WTC11 (cell line): ENCODE measurements at regions of chr2 and their contacts with region 1.

Region 1: DNA sequence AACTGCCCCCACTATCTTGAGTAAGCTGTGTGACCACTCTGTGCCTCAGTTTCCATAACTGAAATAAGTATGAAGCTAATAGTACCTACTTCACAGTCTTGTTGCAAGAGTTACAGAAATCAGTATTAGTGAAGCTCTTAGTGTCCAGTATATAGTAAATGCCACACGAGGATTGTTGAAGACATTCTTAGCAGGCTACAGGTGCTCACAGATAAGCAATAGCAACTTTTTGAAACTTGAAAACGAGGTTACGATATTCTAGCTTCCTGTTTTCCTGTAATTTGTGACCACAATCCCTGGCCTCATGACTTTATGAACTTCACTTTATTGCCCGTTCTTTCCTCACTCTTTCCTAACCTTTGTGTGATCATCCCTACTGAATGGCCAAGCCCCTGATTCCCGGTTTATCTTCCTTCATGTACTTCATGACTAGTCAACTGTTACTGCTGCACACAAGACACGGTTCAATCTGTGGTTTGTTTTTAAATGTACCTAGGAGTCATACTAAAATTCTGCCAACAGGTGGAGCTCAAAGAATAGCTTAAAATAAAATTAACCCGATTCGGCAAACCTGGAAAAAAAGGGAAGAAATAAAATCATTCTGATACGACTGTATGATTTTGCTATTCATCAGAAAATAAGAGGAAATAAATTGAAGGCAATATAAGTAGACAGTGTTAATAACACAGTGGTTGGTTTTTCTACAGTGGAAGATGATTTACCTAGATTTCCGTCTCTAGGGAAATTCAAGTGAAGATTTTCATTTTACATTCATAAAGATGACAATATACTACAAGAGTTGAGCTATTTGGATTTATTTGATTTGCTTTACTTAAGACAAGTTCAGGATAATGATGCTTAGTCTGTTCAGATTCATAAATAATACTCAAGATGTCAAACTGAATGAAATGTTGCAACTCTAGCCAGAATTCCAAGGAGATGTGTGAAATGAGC is 38.1 kb upstream of the STAT1 start:
- DNase-seq: no peak
- ATAC-seq: peak; percentile 53; the same call in 1 of the 2 replicates
- H3K4me3 Mint-ChIP-seq: no peak overlapping the region
- H3K27ac Mint-ChIP-seq: no peak overlapping the region
- H3K4me1 Mint-ChIP-seq: peaks cover 10% of the 10 kb centered on the region; the same call in 1 of the 2 replicates
- H3K27me3 Mint-ChIP-seq: no peaks in the 10 kb centered on the region; the same call in 1 of the 2 replicates
- CTCF ChIP-seq: peak; percentile 54; the same call in 1 of the 2 replicates

Region 2: DNA sequence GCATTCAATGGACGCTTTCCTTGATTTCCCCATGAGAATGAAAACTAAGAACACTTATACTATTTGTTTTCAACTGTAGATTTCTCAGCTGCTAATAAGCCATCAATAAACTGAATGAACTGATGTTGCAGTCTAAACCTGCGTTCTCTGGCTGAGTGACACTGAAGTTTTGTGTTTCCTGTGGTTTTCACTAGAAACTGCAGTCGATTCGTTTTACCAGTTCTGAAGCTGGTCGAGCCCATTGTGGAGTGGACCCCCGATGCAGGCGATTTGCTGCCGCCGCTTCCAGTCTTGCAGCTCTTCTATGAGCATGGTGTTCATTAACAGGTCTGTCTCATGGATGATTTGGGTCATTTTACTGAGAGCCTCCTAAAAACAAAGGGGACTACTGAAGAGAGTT is 12.5 kb after region 1 on chr2:
- CTCF ChIA-PET with region 1: interaction called, 29 read pairs
- POLR2A ChIA-PET with region 1: no interaction called
- DNase-seq: no peak
- ATAC-seq: no peak
- H3K4me3 Mint-ChIP-seq: no peak overlapping the region
- H3K27ac Mint-ChIP-seq: no peak overlapping the region
- H3K4me1 Mint-ChIP-seq: peaks cover 17% of the 10 kb centered on the region
- H3K27me3 Mint-ChIP-seq: no peaks in the 10 kb centered on the region
- CTCF ChIP-seq: no peak

Region 3: GRCh38 chr2:191150600-191151330 is 98.7 kb after region 1 on chr2 and contains the start of gene STAT4:
- CTCF ChIA-PET with region 1: interaction called, 68 read pairs
- POLR2A ChIA-PET with region 1: no interaction called
- DNase-seq: peak; percentile 59
- ATAC-seq: peak; percentile 97
- H3K4me3 Mint-ChIP-seq: peak within 1 kb of the TSS; percentile 74
- H3K27ac Mint-ChIP-seq: no peak within 1 kb of the TSS
- H3K4me1 Mint-ChIP-seq: peaks cover 8% of the 10 kb centered on the region
- H3K27me3 Mint-ChIP-seq: peaks cover 17% of the 10 kb centered on the region
- CTCF ChIP-seq: no peak
- total RNA-seq, gene STAT4: 0.44 to 0.76 TPM (median 0.44 TPM) in 3 replicates

Region 4: GRCh38 chr2:191165176-191165643 is 113.1 kb after region 1 on chr2:
- CTCF ChIA-PET with region 1: interaction called, 29 read pairs
- POLR2A ChIA-PET with region 1: no interaction called
- DNase-seq: no peak
- ATAC-seq: peak; percentile 90
- H3K4me3 Mint-ChIP-seq: no peak overlapping the region
- H3K27ac Mint-ChIP-seq: no peak overlapping the region
- H3K4me1 Mint-ChIP-seq: peaks cover 7% of the 10 kb centered on the region
- H3K27me3 Mint-ChIP-seq: peaks cover 11% of the 10 kb centered on the region
- CTCF ChIP-seq: peak; percentile 38

Region 5: DNA sequence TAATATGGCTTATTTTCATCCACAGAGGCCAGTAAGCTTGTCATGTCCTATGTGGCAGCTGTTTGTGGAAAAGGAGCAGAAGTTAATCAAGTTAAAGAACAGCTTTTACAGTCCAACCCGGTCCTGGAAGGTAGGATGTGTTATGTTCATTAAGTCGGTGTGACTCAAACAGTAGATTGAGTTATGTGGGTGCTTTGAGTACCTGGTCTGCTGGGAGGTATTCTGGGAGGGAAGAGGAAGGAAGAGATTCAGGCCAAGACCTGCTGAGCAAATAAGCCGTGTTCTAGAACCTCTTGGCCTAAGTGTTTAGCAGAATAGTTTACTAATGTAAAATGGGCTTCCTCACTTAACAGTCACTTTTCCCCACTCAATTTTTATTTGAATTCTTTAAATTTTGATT is 289.3 kb after region 1 on chr2:
- CTCF ChIA-PET with region 1: no interaction called
- POLR2A ChIA-PET with region 1: no interaction called
- DNase-seq: no peak
- ATAC-seq: no peak
- H3K4me3 Mint-ChIP-seq: no peak overlapping the region
- H3K27ac Mint-ChIP-seq: no peak overlapping the region
- H3K4me1 Mint-ChIP-seq: peaks cover 10% of the 10 kb centered on the region
- H3K27me3 Mint-ChIP-seq: no peaks in the 10 kb centered on the region
- CTCF ChIP-seq: no peak

Region 6: DNA sequence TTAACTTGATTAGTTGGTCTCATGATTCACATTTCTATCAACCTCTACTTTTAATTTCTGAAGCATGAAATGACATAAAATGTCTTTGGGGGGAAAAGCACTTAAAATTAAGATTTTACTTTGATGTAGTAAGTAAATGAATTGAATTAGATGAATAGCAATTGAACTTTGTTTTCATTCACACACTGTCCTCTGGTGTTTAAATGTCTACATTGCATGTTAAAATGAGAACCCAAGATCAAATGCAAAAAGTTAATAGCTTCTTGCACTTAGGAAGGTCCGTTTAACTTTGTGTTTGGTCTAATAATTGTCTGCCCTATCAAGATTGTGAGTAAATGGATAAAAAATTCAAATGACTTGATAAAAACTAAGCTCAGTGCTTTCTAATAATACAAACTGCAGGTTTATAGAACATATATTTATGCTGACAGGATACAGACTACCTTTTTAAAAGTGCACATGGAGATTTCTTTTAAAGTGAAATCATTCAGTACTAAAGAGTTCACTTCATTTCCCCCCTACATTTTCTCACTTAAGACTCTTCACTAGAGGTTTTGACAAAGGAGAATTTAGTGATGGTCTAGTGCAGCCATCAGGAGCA is 469.6 kb after region 1 on chr2:
- CTCF ChIA-PET with region 1: interaction called, 14 read pairs
- POLR2A ChIA-PET with region 1: no interaction called
- DNase-seq: no peak
- ATAC-seq: no peak
- H3K4me3 Mint-ChIP-seq: no peak overlapping the region
- H3K27ac Mint-ChIP-seq: no peak overlapping the region
- H3K4me1 Mint-ChIP-seq: no peaks in the 10 kb centered on the region
- H3K27me3 Mint-ChIP-seq: no peaks in the 10 kb centered on the region
- CTCF ChIP-seq: peak; percentile 50; the same call in 1 of the 2 replicates